Activated CD4-positive, alpha-beta T cell treated with anti-CD3 and anti-CD28 coated beads for 36 hours (primary cell): ENCODE measurements at regions of chr19 and their contacts with region 1.

Region 1: DNA sequence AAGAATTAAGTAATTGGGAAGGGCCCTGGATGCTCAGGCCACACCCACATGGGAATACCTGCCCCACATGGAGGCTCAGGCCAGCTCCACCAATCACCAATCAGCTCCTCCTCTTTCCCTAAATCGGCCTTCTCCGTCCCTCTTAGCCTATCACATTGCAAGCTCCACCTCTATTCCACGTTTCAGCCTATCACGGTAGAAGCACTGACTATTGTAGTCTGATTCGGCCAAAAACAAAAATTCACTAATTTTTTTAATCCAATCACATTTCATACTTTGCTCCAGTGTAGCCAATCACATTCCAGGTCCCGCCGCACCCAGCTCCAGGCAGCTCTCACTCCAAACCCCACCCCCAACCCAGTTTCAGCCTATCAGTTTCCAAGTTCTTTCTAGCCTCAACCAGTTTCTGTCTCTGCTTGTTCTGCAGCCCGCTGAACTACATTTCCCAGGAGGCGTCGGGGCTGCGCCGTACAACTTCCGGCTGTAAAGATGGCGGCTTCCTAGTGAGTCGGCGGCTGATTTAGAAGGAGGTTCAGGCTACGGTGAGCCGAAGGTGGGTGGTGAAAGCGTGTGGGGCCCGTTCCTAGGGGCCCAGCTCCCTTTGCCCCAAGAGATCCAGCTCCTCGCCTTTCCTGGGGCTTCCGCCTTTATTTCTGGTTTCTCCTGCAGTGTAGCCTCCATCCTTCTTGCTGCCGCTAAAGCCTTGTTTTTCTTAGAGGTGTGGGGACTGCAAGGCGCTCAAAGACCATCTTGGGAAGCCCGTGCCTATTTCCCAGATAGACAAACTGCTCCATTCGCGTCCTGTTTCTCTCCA is at the start of gene BABAM1:
- DNase-seq: peak; percentile 98
- ATAC-seq: peak; percentile 96
- H3K4me3 Mint-ChIP-seq: peak within 1 kb of the TSS; percentile 94
- H3K27ac Mint-ChIP-seq: peak within 1 kb of the TSS; percentile 85
- H3K4me1 Mint-ChIP-seq: peaks cover 11% of the 10 kb centered on the region
- H3K27me3 Mint-ChIP-seq: no peaks in the 10 kb centered on the region
- total RNA-seq, gene BABAM1: 109 to 132 TPM

Region 2: GRCh38 chr19:16572332-16573211 is 694.6 kb before region 1 on chr19 and contains the start of gene SLC35E1:
- CTCF ChIA-PET with region 1: no interaction called
- POLR2A ChIA-PET with region 1: no interaction called
- intact Hi-C with region 1: loop called in 1 of 2 experiments (anchors 1 kb)
- DNase-seq: peak; percentile 96
- ATAC-seq: peak; percentile 97
- H3K4me3 Mint-ChIP-seq: peak within 1 kb of the TSS; percentile 96
- H3K27ac Mint-ChIP-seq: peak within 1 kb of the TSS; percentile 96
- H3K4me1 Mint-ChIP-seq: peaks cover 53% of the 10 kb centered on the region
- H3K27me3 Mint-ChIP-seq: no peaks in the 10 kb centered on the region
- total RNA-seq, gene SLC35E1: 51.5 to 72.1 TPM

Region 3: GRCh38 chr19:16897154-16897855 is 369.9 kb before region 1 on chr19:
- CTCF ChIA-PET with region 1: no interaction called
- POLR2A ChIA-PET with region 1: no interaction called
- intact Hi-C with region 1: loop called in 1 of 2 experiments (anchors 10 kb)
- DNase-seq: peak; percentile 75
- ATAC-seq: peak; percentile 53
- H3K4me3 Mint-ChIP-seq: no peak overlapping the region
- H3K27ac Mint-ChIP-seq: no peak overlapping the region
- H3K4me1 Mint-ChIP-seq: peaks cover 16% of the 10 kb centered on the region
- H3K27me3 Mint-ChIP-seq: peaks cover 26% of the 10 kb centered on the region

Region 4: DNA sequence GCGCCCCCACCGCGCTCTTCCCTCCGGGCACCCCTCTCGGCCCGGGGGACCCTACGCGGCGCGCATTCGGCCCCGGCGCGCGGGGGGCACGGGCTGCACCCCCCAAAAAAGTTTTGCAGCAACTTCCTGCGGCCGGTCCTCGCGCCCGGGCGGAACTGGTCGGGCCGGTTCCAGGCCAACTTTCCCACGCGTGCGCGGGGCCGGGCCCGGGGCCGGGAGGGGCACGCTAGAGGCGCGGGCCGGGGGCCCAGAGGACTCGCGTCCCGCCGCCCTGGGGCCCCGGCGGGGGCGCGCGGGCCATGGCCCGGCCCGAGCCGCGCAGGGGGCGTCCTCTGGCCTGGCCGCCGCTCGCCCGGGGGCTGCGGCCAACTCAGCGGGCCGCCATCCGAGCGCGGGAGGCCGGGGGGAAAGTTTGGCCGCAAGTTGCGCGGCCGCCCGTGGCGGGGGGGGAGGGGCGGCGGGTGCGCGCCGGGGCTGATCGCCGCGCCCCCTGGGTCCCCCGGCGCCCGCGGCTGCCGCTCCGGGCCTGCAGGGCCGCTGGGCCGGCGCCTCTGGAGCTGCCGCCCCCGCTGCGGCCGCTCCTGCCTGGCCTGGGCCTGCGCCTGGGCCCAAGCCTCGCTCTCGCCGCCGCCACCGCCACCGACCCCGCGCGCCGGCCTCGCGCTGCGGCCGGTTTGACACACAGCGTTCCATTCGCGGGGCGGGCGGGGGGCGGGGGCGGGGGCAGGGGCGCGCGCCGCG is 21.8 kb before region 1 on chr19 and contains the start of gene NR2F6:
- CTCF ChIA-PET with region 1: interaction called, 3 read pairs
- POLR2A ChIA-PET with region 1: interaction called, 5 read pairs
- intact Hi-C with region 1: loop called in 1 of 2 experiments (anchors 1 kb)
- DNase-seq: no peak
- ATAC-seq: peak; percentile 13
- H3K4me3 Mint-ChIP-seq: peak within 1 kb of the TSS; percentile 70
- H3K27ac Mint-ChIP-seq: no peak within 1 kb of the TSS
- H3K4me1 Mint-ChIP-seq: peaks cover 5% of the 10 kb centered on the region
- H3K27me3 Mint-ChIP-seq: peaks cover 2% of the 10 kb centered on the region
- total RNA-seq, gene NR2F6: 7.4 to 7.9 TPM

Region 5: DNA sequence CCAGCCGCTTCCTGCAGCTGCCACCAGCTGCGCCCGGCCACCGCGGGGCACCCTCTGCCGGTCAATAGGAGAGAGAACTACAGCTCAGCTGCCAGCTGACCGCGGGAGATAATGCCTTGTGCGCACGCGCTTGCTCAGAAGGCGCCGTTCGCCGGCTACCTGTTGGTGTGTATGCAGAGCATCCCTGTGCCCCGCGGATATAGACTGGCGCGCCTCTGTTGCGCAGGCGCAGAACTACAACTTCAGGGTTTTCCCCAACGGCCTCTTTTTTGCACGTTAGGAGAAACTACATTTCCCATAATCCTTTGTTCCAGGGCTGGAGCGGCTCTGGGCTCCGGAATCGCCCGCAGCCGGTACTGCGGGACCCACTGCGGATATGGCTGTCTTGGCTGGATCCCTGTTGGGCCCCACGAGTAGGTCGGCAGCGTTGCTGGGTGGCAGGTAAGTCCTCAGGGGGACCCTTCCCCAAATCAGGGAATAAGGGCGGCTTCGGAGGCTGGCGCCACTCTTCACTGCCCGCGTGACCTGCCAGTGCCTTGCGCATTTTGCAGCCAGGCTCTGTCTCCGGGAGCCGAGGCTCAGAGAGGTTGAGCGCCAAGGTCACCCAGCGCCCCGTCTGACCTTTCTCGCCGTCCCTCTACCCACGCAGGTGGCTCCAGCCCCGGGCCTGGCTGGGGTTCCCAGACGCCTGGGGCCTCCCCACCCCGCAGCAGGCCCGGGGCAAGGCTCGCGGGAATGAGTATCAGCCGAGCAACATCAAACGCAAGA is 38.5 kb after region 1 on chr19 and contains the start of gene MRPL34:
- CTCF ChIA-PET with region 1: interaction called, 7 read pairs
- POLR2A ChIA-PET with region 1: interaction called, 4 read pairs
- intact Hi-C with region 1: loop called (anchors 1 kb)
- DNase-seq: peak; percentile 97
- ATAC-seq: peak; percentile 70
- H3K4me3 Mint-ChIP-seq: peak within 1 kb of the TSS; percentile 86
- H3K27ac Mint-ChIP-seq: peak within 1 kb of the TSS; percentile 92
- H3K4me1 Mint-ChIP-seq: peaks cover 46% of the 10 kb centered on the region
- H3K27me3 Mint-ChIP-seq: no peaks in the 10 kb centered on the region
- total RNA-seq, gene MRPL34: 72.0 to 88.6 TPM

Region 6: GRCh38 chr19:17470068-17470841 is 203.1 kb after region 1 on chr19 and contains the start of gene SLC27A1:
- CTCF ChIA-PET with region 1: no interaction called
- POLR2A ChIA-PET with region 1: no interaction called
- intact Hi-C with region 1: loop called in 1 of 2 experiments (anchors 1 kb)
- DNase-seq: peak; percentile 93
- ATAC-seq: peak; percentile 90
- H3K4me3 Mint-ChIP-seq: peak within 1 kb of the TSS; percentile 86
- H3K27ac Mint-ChIP-seq: peak within 1 kb of the TSS; percentile 91
- H3K4me1 Mint-ChIP-seq: peaks cover 25% of the 10 kb centered on the region
- H3K27me3 Mint-ChIP-seq: no peaks in the 10 kb centered on the region
- total RNA-seq, gene SLC27A1: 2.2 to 2.7 TPM